Posterior cingulate gyrus (tissue), 11 donors: ENCODE measurements at regions of chr19 and their contacts with region 1.

Region 1: DNA sequence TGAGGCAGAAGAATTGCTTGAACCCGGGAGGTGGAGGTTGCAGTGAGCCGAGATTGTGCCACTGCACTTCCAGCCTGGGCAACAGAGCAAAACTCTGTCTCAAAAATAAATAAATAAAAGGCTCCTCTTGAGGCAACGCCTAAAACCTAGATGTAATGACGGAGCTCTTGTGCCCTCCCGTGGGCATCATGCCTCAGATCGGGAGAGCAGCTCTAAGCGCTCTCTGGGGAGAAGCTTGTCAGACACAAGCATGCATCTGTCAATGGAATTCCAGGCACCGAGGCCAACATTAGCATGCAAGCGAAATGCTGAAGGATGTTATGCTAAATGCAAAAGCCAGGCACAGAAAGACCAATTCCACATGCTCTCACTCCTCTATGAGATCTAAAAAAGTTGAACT is 45.6 kb upstream of the MRI1 start:
- DNase-seq: peak; percentile 41 to 96 (median 74)

Region 2: GRCh38 chr19:13597640-13598039 is 121.1 kb before region 1 on chr19:
- intact Hi-C with region 1: loop called (anchors 2 kb)
- DNase-seq: peak in 8 of 10 donors; percentile 23 to 91 (median 43)

Region 3: GRCh38 chr19:13619203-13619632 is 99.5 kb before region 1 on chr19:
- intact Hi-C with region 1: loop called (anchors 5 kb)
- DNase-seq: no peak

Region 4: DNA sequence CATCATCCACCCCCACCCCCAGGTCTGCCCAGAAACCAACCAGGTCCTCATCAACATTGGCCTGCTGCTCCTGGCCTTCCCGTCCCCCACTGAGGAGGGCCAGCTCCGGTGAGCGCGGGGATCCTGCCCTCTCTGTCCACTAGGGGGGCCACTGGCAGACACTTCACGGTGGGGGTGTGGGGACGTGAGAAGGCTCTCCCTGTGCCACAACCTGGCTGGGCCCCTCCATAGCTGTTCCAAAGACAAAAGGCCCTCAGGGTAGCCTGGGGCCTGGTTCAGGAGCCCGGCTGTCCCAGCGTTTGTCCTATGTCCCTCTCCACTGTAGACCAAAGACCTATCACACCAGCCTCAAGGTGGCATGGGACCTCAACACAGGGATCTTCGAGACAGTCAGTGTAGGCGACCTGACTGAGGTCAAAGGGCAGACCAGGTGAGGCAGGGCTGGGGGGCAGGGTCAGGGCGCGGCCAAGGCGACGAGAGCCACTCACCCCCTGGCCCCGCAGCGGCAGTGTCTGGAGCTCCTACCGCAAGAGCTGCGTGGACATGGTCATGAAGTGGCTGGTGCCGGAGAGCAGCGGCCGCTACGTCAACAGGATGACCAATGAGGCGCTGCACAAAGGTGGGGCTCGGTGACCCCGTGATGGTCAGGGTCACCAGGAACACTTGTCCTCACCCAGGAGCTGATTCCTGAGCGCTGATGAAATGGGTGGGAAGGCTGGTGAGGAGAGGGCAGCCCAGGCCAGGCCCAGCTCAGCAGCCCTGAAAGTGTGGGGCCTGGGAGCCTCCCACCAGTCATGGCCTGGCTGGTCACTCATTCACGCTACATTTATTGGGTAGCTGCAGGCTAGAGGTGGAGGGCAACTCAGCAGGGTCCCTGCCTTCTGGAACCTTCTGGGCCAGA is 241.5 kb after region 1 on chr19:
- intact Hi-C with region 1: no loop called
- DNase-seq: no peak